CD4-positive, alpha-beta memory T cell (primary cell): ENCODE measurements at regions of chr2 and their contacts with region 1.

Region 1: GRCh38 chr2:236569573-236569973 is at the start of gene ACKR3:
- DNase-seq: peak; percentile 76 to 90 (median 82)
- H3K4me3 ChIP-seq: peak within 1 kb of the TSS in 1 of 2 donors; percentile 27
- H3K4me3 Mint-ChIP-seq: peak within 1 kb of the TSS; percentile 57 to 77 (median 66)
- H3K27ac ChIP-seq: no peak within 1 kb of the TSS
- H3K27ac Mint-ChIP-seq: peak within 1 kb of the TSS; percentile 10 to 77 (median 72)
- H3K4me1 ChIP-seq: peaks cover 20% of the 10 kb centered on the region
- H3K4me1 Mint-ChIP-seq: peaks cover 20 to 32% (median 24%) of the 10 kb centered on the region in 4 donors
- H3K27me3 ChIP-seq: no peaks in the 10 kb centered on the region
- H3K27me3 Mint-ChIP-seq: no peaks in the 10 kb centered on the region
- total RNA-seq, gene ACKR3: 4.2 TPM

Region 2: GRCh38 chr2:236369661-236370062 is 199.9 kb before region 1 on chr2:
- CTCF ChIA-PET with region 1: no interaction called
- POLR2A ChIA-PET with region 1: interaction called, 6 read pairs
- intact Hi-C with region 1: loop called (anchors 5 kb)
- DNase-seq: no peak
- H3K4me3 ChIP-seq: no peak overlapping the region
- H3K4me3 Mint-ChIP-seq: no peak overlapping the region
- H3K27ac ChIP-seq: no peak overlapping the region
- H3K27ac Mint-ChIP-seq: no peak overlapping the region
- H3K4me1 ChIP-seq: peaks cover 34% of the 10 kb centered on the region
- H3K4me1 Mint-ChIP-seq: peaks cover 24 to 38% (median 33%) of the 10 kb centered on the region in 4 donors
- H3K27me3 ChIP-seq: no peaks in the 10 kb centered on the region
- H3K27me3 Mint-ChIP-seq: peaks cover 8 to 16% of the 10 kb centered on the region in 2 donors

Region 3: GRCh38 chr2:236512902-236513435 is 56.6 kb before region 1 on chr2:
- CTCF ChIA-PET with region 1: interaction called, 410 read pairs
- POLR2A ChIA-PET with region 1: interaction called, 35 read pairs
- intact Hi-C with region 1: loop called (anchors 1 kb)
- DNase-seq: peak; percentile 58 to 72 (median 64)
- H3K4me3 ChIP-seq: no peak overlapping the region
- H3K4me3 Mint-ChIP-seq: no peak overlapping the region
- H3K27ac ChIP-seq: no peak overlapping the region
- H3K27ac Mint-ChIP-seq: no peak overlapping the region
- H3K4me1 ChIP-seq: peaks cover 9% of the 10 kb centered on the region
- H3K4me1 Mint-ChIP-seq: peaks cover 0 to 5% (median 3%) of the 10 kb centered on the region in 4 donors
- H3K27me3 ChIP-seq: no peaks in the 10 kb centered on the region
- H3K27me3 Mint-ChIP-seq: peaks cover 3 to 4% of the 10 kb centered on the region in 2 donors

Region 4: DNA sequence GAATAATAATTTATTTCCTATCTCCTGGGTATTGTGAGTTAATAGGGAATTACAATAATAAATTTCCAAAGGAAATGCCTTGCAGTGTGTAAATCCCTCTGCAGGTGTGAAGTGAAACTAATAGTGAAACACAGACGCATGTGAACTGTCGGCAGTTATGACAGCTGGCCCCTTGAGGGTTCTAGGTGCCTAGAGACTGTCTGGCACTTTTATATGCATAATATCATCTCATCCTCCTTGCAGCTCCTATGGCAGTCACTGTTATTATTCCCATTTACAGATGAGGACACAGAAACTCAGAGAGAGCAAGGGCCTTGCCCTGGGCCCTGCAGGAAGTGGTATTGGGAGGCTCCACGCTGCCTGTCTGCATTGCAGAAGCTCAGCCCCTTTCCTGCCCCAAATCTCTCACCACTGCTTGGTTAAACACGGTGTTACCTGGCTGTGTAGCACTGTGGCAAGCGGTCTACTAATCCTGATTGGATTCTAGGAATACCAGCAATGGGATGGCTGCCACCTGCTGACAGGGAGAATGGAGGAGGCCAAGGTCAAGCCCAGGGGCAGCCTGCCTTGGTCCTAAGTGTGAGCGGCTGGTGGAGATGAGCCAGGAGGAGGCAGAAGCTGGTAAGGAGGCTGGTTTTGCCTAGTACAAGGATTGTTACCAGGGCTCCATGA is 32.7 kb before region 1 on chr2:
- CTCF ChIA-PET with region 1: interaction called, 40 read pairs
- POLR2A ChIA-PET with region 1: interaction called, 25 read pairs
- intact Hi-C with region 1: loop called (anchors 1 kb)
- DNase-seq: peak; percentile 56 to 66 (median 58)
- H3K4me3 ChIP-seq: peak overlapping the region; percentile 71 to 72
- H3K4me3 Mint-ChIP-seq: peak overlapping the region; percentile 97 to 100 (median 100)
- H3K27ac ChIP-seq: peak overlapping the region; percentile 69
- H3K27ac Mint-ChIP-seq: peak overlapping the region; percentile 90 to 100 (median 97)
- H3K4me1 ChIP-seq: peaks cover 45% of the 10 kb centered on the region
- H3K4me1 Mint-ChIP-seq: peaks cover 38 to 69% (median 51%) of the 10 kb centered on the region in 4 donors
- H3K27me3 ChIP-seq: no peaks in the 10 kb centered on the region
- H3K27me3 Mint-ChIP-seq: no peaks in the 10 kb centered on the region

Region 5: DNA sequence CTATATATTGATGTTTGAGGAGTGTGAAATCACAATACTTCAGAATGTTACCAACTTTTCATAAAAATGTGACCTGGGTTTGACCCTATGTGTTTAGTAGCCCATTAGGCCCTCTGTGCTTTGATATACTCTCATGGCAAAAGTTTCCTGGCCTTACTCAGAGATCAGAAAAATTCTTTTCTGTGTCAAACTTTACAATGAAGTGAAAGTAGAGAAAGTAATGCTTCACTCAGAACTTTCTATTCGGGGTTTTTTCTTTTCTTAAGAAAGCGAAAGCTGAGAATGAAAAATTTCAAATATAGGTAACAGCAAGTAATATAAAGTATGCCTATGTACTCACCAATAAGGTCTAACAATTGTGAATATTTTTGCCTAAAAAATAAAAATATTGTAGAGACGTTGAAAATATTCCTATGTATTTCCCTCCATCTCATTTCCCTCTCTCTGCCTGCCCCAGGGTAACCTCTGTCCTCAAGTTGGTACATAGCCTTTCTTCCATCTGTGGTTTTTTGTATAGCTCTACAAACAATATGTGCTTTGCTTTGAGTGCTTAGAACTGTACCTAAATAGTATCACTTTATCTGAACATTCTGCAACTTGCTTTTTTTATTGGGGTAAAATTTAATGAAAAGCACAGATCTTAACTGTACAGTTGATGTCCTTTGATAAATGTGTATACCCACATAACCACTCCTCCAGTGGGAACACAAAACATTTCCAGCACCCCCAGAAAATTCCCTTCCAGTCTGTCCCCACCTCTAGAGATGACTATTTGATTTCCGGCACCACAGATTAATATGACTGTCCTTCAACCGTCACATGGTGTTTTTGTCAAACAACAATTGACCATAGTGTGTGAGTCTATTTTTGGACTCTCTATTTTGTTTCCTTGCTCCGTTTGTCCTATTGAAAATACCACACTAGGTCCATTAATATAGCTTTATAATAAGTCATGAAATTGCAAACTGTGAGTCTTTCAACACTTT is 10.3 kb before region 1 on chr2:
- CTCF ChIA-PET with region 1: interaction called, 40 read pairs
- POLR2A ChIA-PET with region 1: interaction called, 6 read pairs
- intact Hi-C with region 1: no loop called
- DNase-seq: no peak
- H3K4me3 ChIP-seq: no peak overlapping the region
- H3K4me3 Mint-ChIP-seq: peak overlapping the region in 3 of 8 donors; percentile 25 to 57 (median 27)
- H3K27ac ChIP-seq: no peak overlapping the region
- H3K27ac Mint-ChIP-seq: peak overlapping the region in 5 of 7 donors; percentile 12 to 53 (median 28)
- H3K4me1 ChIP-seq: peaks cover 31% of the 10 kb centered on the region
- H3K4me1 Mint-ChIP-seq: peaks cover 32 to 55% (median 46%) of the 10 kb centered on the region in 4 donors
- H3K27me3 ChIP-seq: no peaks in the 10 kb centered on the region
- H3K27me3 Mint-ChIP-seq: no peaks in the 10 kb centered on the region

Region 6: DNA sequence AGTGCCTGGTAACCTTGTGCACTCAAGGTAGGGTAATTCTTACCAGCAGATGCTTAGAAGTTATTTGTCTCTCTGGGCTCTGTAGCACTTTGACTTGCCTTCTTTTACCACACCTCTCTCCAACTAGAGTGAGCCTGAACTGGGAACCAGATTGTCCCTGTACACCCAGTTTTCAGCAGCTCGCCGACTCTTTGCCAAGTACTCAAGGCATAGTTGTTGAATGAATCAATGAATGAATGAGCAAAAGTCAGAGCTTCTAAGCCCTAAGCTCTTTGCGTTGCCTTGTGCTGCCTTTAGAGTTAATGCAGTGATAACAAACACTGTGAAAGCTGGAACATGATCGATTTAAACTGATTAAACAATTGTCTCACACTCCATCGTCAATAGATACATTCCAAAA is 27.5 kb after region 1 on chr2:
- CTCF ChIA-PET with region 1: no interaction called
- POLR2A ChIA-PET with region 1: no interaction called
- intact Hi-C with region 1: no loop called
- DNase-seq: no peak
- H3K4me3 ChIP-seq: no peak overlapping the region
- H3K4me3 Mint-ChIP-seq: no peak overlapping the region
- H3K27ac ChIP-seq: no peak overlapping the region
- H3K27ac Mint-ChIP-seq: no peak overlapping the region
- H3K4me1 ChIP-seq: no peaks in the 10 kb centered on the region
- H3K4me1 Mint-ChIP-seq: no peaks in the 10 kb centered on the region
- H3K27me3 ChIP-seq: no peaks in the 10 kb centered on the region
- H3K27me3 Mint-ChIP-seq: peaks cover 0 to 2% of the 10 kb centered on the region in 2 donors

Region 7: DNA sequence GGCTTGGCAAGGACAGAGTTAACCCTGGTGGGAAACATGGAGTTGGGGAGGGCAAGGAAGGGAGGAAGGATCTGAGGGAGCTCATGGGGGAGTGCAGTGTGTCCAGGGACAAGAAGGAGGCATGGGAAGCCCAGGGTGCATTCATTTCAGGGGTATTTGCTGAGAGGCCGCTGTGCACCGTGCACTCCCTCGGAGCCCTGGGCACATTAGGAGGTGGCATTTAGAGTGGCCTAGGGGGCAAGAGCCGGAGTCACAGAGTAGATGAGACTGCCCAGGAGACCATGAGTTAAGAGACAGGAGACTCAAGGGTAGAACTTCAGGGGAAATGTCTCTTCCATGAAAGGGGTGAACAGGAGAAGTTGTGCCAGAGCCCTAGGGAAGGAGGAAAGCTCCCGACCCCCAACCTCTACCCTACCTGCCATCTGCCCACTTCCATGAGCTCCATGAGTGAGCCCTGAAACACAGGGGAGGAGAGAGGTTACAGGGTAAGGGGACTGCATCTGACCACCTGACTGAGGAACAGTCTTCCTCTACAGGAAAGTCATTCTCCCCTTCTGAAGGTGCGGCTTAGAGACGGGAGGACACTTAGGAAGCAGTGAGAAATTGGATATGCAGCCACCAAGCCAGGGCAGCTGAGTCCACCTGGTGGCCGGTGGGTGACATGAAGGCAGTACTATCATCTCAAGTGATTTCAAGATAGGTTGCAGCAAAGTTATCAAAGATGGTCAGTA is 457.6 kb after region 1 on chr2:
- CTCF ChIA-PET with region 1: interaction called, 7 read pairs
- POLR2A ChIA-PET with region 1: no interaction called
- intact Hi-C with region 1: loop called (anchors 1 kb)
- DNase-seq: peak; percentile 21 to 41 (median 29)
- H3K4me3 ChIP-seq: no peak overlapping the region
- H3K4me3 Mint-ChIP-seq: no peak overlapping the region
- H3K27ac ChIP-seq: no peak overlapping the region
- H3K27ac Mint-ChIP-seq: no peak overlapping the region
- H3K4me1 ChIP-seq: no peaks in the 10 kb centered on the region
- H3K4me1 Mint-ChIP-seq: peaks cover 0 to 2% (median 0%) of the 10 kb centered on the region in 4 donors
- H3K27me3 ChIP-seq: no peaks in the 10 kb centered on the region
- H3K27me3 Mint-ChIP-seq: peaks cover 0 to 1% of the 10 kb centered on the region in 2 donors